B cell (primary cell): ENCODE measurements at regions of chr10 and their contacts with region 1.

Region 1: DNA sequence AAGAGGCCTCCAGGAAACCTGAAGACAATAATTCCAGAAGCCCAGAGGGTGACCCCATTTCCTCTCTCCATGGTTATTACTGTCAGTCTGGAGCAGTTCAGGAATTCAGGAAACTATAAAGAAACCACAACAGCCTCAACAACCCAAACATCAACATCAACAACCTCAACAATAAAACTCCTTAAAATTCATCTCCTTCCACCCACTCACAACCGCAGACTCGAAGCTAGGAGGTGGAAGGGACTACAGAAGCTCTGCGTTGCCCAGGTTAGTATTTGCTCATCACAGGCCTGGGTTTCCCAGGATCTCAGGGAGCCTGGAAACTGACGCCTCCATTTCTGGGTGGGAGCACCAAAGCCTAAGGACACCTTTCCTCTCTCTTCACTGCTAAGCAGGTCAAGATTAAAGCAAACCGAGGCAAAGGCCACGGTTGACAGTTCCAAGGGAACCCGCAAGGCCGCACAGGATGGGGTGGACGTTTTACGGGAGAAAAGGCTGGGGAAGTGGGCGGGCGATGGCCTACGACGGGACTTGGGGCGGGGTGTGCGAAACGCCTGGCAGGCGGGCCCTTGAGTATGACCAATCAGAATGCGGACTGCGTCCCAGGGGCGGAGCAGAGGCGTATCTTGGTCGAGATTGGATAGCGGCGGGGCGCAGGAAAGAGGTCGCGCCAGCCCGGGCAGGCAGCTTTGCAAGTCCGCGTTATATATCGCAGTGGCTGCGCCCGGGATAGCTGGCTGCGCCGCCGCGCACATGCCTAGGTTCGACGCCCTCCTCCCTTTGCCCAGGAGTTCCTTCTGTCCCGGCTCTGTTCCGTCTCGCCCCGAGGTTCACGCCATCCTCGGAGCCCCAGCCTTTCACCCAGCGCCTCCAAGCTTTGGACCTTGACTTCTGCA is at the start of gene ELOVL3:
- DNase-seq: peak; percentile 85
- ATAC-seq: peak; percentile 89
- H3K4me3 ChIP-seq: peak within 1 kb of the TSS in 4 of 5 experiments; percentile 16 to 53 (median 36)
- H3K4me3 Mint-ChIP-seq: peak within 1 kb of the TSS; percentile 84
- H3K27ac ChIP-seq: no peak within 1 kb of the TSS
- H3K27ac Mint-ChIP-seq: no peak within 1 kb of the TSS
- H3K4me1 ChIP-seq: peaks cover 21 to 26% of the 10 kb centered on the region in 2 donors
- H3K4me1 Mint-ChIP-seq: peaks cover 25% of the 10 kb centered on the region
- H3K27me3 ChIP-seq: peaks cover 0 to 53% (median 36%) of the 10 kb centered on the region in 4 experiments
- H3K27me3 Mint-ChIP-seq: peaks cover 67% of the 10 kb centered on the region
- CTCF ChIP-seq: no peak
- total RNA-seq, gene ELOVL3: not detected in 2 replicates

Region 2: GRCh38 chr10:102245101-102245931 is 19.4 kb after region 1 on chr10 and contains the start of gene GBF1:
- CTCF ChIA-PET with region 1: interaction called, 46 read pairs
- POLR2A ChIA-PET with region 1: interaction called, 8 read pairs
- intact Hi-C with region 1: loop called (anchors 1 kb)
- DNase-seq: peak; percentile 98
- ATAC-seq: peak; percentile 86
- H3K4me3 ChIP-seq: peak within 1 kb of the TSS; percentile 80 to 99 (median 98)
- H3K4me3 Mint-ChIP-seq: peak within 1 kb of the TSS; percentile 94
- H3K27ac ChIP-seq: peak within 1 kb of the TSS; percentile 86 to 90
- H3K27ac Mint-ChIP-seq: peak within 1 kb of the TSS; percentile 38
- H3K4me1 ChIP-seq: peaks cover 50 to 51% of the 10 kb centered on the region in 2 donors
- H3K4me1 Mint-ChIP-seq: peaks cover 56% of the 10 kb centered on the region
- H3K27me3 ChIP-seq: peaks cover 0 to 31% (median 27%) of the 10 kb centered on the region in 4 experiments
- H3K27me3 Mint-ChIP-seq: peaks cover 23% of the 10 kb centered on the region
- CTCF ChIP-seq: no peak
- total RNA-seq, gene GBF1: 39.3 and 41.2 TPM in 2 replicates

Region 3: DNA sequence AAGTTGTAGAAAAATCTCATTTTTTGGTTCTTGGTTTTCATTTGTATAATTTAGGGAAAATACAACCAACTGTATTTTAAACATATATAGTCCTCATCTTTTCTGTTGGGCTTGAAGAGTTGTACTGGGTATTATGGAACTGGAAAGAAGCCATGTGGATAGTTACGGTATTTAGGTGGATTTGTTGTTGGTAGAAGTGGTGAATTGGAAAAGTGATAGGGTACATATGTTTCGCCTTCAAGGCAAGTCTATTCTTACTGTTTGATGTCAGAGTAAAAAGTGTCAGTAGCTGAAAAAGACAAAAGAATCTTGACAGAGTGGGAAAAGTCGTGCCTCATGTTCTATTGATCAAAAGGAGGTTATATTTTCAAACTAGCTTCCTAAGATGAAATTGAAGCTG is 84.0 kb after region 1 on chr10:
- CTCF ChIA-PET with region 1: interaction called, 13 read pairs
- POLR2A ChIA-PET with region 1: no interaction called
- intact Hi-C with region 1: no loop called
- DNase-seq: no peak
- ATAC-seq: no peak
- H3K4me3 ChIP-seq: no peak overlapping the region
- H3K4me3 Mint-ChIP-seq: no peak overlapping the region
- H3K27ac ChIP-seq: no peak overlapping the region
- H3K27ac Mint-ChIP-seq: no peak overlapping the region
- H3K4me1 ChIP-seq: no peaks in the 10 kb centered on the region
- H3K4me1 Mint-ChIP-seq: peaks cover 15% of the 10 kb centered on the region
- H3K27me3 ChIP-seq: no peaks in the 10 kb centered on the region
- H3K27me3 Mint-ChIP-seq: no peaks in the 10 kb centered on the region
- CTCF ChIP-seq: no peak

Region 4: GRCh38 chr10:102368072-102368471 is 142.2 kb after region 1 on chr10:
- CTCF ChIA-PET with region 1: interaction called, 10 read pairs
- POLR2A ChIA-PET with region 1: no interaction called
- intact Hi-C with region 1: no loop called
- DNase-seq: no peak
- ATAC-seq: no peak
- H3K4me3 ChIP-seq: no peak overlapping the region
- H3K4me3 Mint-ChIP-seq: no peak overlapping the region
- H3K27ac ChIP-seq: no peak overlapping the region
- H3K27ac Mint-ChIP-seq: no peak overlapping the region
- H3K4me1 ChIP-seq: no peaks in the 10 kb centered on the region
- H3K4me1 Mint-ChIP-seq: no peaks in the 10 kb centered on the region
- H3K27me3 ChIP-seq: no peaks in the 10 kb centered on the region
- H3K27me3 Mint-ChIP-seq: no peaks in the 10 kb centered on the region
- CTCF ChIP-seq: no peak

Region 5: DNA sequence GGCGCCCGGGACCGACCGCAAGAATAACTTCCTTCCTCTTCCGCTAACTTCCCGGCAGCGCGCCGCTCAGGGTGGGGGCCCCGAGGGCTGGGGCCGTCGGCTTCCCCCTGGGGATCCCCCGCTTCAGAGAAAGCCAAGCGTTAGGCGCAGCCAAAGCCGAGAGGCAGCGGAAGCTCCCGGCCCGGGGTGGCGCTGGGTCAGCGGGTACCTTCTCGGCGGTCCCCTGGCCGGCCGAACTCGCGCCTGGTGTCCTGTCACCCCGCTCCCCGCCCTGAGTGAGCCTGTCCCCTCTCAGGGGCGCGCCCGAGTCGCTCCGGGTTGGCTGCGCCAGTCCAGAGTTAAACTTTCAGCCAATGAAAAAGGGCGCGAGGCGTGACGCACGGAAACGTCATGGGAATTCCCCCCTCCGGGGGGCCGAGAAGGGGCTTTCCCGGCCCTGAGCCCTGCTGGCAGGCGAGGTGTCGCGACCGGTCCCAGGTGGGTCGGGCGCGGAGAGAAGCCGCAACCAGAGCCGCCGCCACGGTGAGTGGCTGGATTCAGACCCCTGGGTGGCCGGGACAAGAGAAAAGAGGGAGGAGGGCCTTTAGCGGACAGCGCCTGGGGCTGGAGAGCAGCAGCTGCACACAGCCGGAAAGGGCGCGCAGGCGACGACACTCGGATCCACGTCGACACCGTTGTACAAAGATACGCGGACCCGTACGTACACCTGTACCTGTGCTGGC is 168.3 kb after region 1 on chr10:
- CTCF ChIA-PET with region 1: interaction called, 33 read pairs
- POLR2A ChIA-PET with region 1: interaction called, 3 read pairs
- intact Hi-C with region 1: loop called (anchors 1 kb)
- DNase-seq: peak; percentile 100
- ATAC-seq: peak; percentile 76
- H3K4me3 ChIP-seq: peak overlapping the region; percentile 86 to 100 (median 99)
- H3K4me3 Mint-ChIP-seq: peak overlapping the region; percentile 95
- H3K27ac ChIP-seq: peak overlapping the region; percentile 98 to 100
- H3K27ac Mint-ChIP-seq: peak overlapping the region; percentile 99
- H3K4me1 ChIP-seq: peaks cover 35 to 44% of the 10 kb centered on the region in 2 donors
- H3K4me1 Mint-ChIP-seq: peaks cover 41% of the 10 kb centered on the region
- H3K27me3 ChIP-seq: no peaks in the 10 kb centered on the region
- H3K27me3 Mint-ChIP-seq: no peaks in the 10 kb centered on the region
- CTCF ChIP-seq: peak; percentile 38

Region 6: GRCh38 chr10:102476466-102477141 is 250.7 kb after region 1 on chr10:
- CTCF ChIA-PET with region 1: interaction called, 57 read pairs
- POLR2A ChIA-PET with region 1: no interaction called
- intact Hi-C with region 1: loop called (anchors 1 kb)
- DNase-seq: no peak
- ATAC-seq: no peak
- H3K4me3 ChIP-seq: no peak overlapping the region
- H3K4me3 Mint-ChIP-seq: no peak overlapping the region
- H3K27ac ChIP-seq: no peak overlapping the region
- H3K27ac Mint-ChIP-seq: no peak overlapping the region
- H3K4me1 ChIP-seq: peaks cover 0 to 7% of the 10 kb centered on the region in 2 donors
- H3K4me1 Mint-ChIP-seq: peaks cover 7% of the 10 kb centered on the region
- H3K27me3 ChIP-seq: no peaks in the 10 kb centered on the region
- H3K27me3 Mint-ChIP-seq: no peaks in the 10 kb centered on the region
- CTCF ChIP-seq: no peak

Region 7: DNA sequence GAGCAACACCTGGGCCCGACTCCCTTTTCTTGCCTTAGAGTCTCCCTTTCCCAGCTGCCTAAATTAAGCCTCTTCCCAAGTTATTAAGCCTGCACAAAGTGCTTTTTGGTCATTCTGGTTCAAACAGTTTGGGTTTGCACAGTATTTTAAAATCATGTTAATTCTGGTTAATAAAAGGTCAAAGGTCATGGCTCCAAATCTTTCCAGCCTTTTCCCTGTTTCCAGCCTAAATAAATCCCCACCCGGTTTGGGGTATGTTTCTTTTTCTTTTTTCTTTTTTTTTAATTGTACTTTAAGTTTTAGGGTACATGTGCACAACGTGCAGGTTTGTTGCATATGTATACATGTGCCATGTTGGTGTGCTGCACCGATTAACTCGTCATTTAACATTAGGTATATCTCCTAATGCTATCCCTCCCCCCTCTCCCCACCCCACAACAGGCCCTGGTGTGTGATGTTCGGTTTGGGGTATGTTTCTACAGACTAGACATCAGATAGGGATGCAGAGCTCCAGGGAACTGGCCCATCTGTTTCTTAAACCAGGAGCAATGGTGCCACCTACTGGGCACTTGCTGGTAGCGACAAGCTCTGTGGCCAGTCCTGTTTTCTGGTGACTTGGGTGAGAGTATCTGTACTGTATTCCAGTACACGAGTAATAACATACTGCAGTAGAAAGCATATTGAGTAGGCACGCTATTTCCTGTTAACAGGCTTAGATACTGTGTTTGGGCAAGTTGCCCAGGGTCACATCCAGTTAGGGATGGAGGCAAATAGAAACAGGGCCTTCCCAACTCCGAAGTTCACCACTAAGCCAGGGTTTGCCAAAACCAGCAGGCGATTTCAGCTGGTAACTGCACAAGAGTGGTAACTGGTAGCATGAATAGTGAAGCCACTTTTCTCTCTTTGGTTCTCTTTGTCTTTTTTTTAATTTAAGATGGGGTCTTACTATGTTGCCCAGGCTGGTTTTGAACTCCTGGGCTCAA is 357.8 kb after region 1 on chr10:
- CTCF ChIA-PET with region 1: interaction called, 47 read pairs
- POLR2A ChIA-PET with region 1: interaction called, 3 read pairs
- intact Hi-C with region 1: loop called (anchors 1 kb)
- DNase-seq: peak; percentile 85
- ATAC-seq: peak; percentile 96
- H3K4me3 ChIP-seq: no peak overlapping the region
- H3K4me3 Mint-ChIP-seq: no peak overlapping the region
- H3K27ac ChIP-seq: no peak overlapping the region
- H3K27ac Mint-ChIP-seq: no peak overlapping the region
- H3K4me1 ChIP-seq: no peaks in the 10 kb centered on the region
- H3K4me1 Mint-ChIP-seq: peaks cover 2% of the 10 kb centered on the region
- H3K27me3 ChIP-seq: no peaks in the 10 kb centered on the region
- H3K27me3 Mint-ChIP-seq: no peaks in the 10 kb centered on the region
- CTCF ChIP-seq: peak; percentile 90